ENCODE measurements at regions of chr5 and their contacts with region 1.

Region 1: GRCh38 chr5:115309751-115310370 is 13.4 kb upstream of the CCDC112 start:
- DNase-seq: peak; percentile 53
- H3K4me3 Mint-ChIP-seq: no peak overlapping the region
- H3K27ac Mint-ChIP-seq: no peak overlapping the region
- H3K4me1 Mint-ChIP-seq: no peaks in the 10 kb centered on the region
- H3K27me3 Mint-ChIP-seq: no peaks in the 10 kb centered on the region
- CTCF ChIP-seq: peak; percentile 66

Region 2: DNA sequence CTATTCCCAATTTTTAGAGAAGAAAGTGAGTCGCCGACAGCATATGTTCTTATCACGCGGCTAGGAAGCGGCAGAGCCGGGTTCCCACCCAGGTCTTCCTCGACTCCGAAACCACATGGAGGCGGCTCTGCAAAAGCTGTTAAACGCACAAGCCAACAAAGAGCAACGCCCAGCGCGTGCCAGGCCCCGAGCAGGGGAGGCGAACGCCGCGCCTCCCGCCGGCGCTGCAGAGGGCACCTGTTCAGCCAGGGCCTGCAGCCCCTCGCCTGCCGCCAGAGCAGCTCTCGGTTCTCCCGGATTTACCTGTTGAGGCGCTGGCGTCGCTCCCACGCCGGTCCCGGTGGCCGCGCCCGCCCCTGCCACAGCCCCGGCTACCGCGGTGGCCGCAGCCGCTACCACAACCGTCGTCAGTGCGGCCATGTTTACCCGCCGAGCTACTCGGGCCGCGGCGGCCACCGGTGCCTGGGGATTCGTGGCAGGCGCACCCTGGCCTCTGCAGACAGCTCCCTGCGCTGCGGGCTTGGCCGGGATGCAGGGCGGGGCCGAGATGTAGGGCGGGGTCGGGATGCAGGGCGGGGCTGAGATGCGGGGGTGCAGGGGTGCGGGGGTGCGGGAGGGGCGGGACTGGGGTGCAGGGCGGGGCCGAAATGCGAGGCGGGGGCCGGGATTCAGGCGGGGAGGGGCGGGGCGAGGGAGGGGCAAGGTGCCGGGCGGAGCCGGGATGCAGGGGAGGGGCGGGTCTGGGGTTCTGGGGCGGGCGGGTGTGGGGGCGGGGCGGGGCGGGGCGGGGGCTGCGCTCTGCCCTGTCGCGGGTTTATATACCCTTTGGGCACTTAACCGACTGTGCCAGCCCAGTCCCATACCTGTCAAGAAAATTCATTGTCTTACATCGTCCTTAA is 13.5 kb before region 1 on chr5 and contains the start of gene CCDC112:
- CTCF ChIA-PET with region 1: interaction called, 10 read pairs
- POLR2A ChIA-PET with region 1: interaction called, 4 read pairs
- intact Hi-C with region 1: no loop called
- DNase-seq: peak; percentile 84
- H3K4me3 Mint-ChIP-seq: peak within 1 kb of the TSS; percentile 78
- H3K27ac Mint-ChIP-seq: peak within 1 kb of the TSS; percentile 53
- H3K4me1 Mint-ChIP-seq: peaks cover 17% of the 10 kb centered on the region
- H3K27me3 Mint-ChIP-seq: no peaks in the 10 kb centered on the region
- CTCF ChIP-seq: no peak
- total RNA-seq, gene CCDC112: 10.3 and 10.7 TPM in 2 replicates

Region 3: GRCh38 chr5:115372146-115372545 is 62.3 kb after region 1 on chr5:
- CTCF ChIA-PET with region 1: interaction called, 13 read pairs
- POLR2A ChIA-PET with region 1: no interaction called
- intact Hi-C with region 1: loop called (anchors 5 kb)
- DNase-seq: no peak
- H3K4me3 Mint-ChIP-seq: no peak overlapping the region
- H3K27ac Mint-ChIP-seq: no peak overlapping the region
- H3K4me1 Mint-ChIP-seq: peaks cover 2% of the 10 kb centered on the region
- H3K27me3 Mint-ChIP-seq: no peaks in the 10 kb centered on the region
- CTCF ChIP-seq: no peak

Region 4: DNA sequence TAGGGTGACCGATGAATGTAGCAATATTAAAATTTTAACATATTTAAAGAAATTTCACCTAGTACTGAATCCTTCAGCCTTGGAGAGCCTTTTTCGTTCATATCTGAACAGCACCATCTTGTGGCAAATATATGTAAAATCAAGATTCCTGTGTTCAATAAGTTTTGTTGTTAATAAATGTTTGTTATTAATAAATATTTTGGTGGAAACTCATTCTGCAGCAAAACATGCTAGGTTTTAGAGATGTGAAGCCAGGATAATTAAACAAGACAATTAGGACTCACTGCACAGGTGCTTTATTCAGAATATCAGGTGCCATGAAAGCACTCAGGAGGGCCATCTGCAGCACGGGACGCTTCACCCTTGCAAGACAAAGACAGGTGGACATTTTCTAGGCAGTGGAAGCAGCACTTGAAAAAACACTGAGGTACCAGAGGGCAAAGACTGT is 276.8 kb after region 1 on chr5:
- CTCF ChIA-PET with region 1: interaction called, 42 read pairs
- POLR2A ChIA-PET with region 1: interaction called, 3 read pairs
- intact Hi-C with region 1: loop called (anchors 1 kb)
- DNase-seq: peak; percentile 44
- H3K4me3 Mint-ChIP-seq: no peak overlapping the region
- H3K27ac Mint-ChIP-seq: no peak overlapping the region
- H3K4me1 Mint-ChIP-seq: no peaks in the 10 kb centered on the region
- H3K27me3 Mint-ChIP-seq: no peaks in the 10 kb centered on the region
- CTCF ChIP-seq: peak; percentile 45

Region 5: DNA sequence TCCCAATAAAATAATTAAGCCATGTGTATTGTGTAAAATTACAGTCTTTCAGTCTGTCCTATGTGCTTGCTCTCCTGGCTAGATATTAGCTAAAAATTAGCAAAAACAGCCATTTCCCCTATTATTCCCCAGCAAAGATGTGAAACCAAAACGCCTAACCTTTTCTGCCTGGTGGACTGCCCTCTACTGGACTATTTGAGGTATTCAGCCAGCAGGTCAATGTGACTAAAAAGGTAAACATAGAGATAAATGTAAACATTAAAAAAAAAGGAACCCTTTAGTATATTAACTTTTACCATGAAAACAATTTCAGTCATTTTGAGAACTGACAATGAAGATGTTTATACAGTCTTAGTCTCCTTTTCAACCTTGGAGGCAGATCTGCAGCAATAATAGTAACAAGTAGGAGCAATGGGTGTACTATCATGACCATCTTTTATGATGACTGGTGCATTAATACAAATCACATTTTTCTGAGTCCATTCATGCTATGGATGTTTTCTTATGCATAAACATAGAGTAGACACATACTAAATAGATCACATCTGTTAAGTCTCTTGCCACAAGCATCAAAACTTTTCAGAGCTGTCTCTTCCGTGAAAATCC is 521.4 kb after region 1 on chr5:
- CTCF ChIA-PET with region 1: no interaction called
- POLR2A ChIA-PET with region 1: no interaction called
- intact Hi-C with region 1: loop called (anchors 5 kb)
- DNase-seq: peak; percentile 63
- H3K4me3 Mint-ChIP-seq: no peak overlapping the region
- H3K27ac Mint-ChIP-seq: peak overlapping the region; percentile 19
- H3K4me1 Mint-ChIP-seq: peaks cover 7% of the 10 kb centered on the region
- H3K27me3 Mint-ChIP-seq: no peaks in the 10 kb centered on the region
- CTCF ChIP-seq: peak; percentile 62

Measured in MCF 10A (cell line).